Breast epithelium (tissue), 4 donors: ENCODE measurements at regions of chr12 and their contacts with region 1.

Region 1: DNA sequence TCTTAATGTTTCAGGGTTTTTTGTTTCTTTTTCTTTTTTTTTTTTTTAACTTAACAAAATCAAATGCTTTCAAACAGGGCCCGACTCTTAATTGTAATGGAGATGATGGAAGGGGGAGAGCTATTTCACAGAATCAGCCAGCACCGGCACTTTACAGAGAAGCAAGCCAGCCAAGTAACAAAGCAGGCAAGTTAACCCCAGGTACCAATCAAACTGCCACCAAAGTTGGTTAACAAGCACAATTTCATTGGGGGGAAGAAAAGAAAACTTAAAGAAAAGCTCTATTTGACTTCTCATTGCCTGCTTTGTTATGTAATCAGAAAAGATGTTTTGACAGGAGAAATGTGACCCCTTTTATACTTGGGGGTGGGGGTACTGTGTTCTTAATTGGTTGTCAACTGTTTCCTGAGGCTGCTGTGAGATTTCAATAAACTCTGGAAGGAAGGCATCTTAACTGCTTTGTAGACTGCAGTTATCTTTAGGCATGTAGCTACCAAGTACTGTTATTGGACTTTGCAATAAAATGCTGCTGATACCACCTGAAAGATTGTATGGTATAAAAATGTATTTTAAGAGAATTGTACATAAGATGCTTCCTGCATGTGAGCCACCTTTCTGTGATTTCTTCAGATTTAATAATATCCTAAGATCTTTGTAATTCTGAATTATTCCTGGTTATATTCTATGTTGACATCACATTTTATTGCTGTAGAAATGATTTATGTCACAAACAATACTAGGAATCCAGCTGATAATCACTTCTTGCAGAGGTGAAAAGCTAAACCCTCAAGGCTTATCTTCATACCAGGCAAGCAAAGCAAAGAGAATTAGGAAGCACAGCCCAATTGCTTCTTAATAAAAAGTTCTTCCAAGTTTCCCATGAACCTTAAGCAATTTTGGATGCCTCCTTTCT is 26.9 kb downstream of the MAPKAPK5 start:
- DNase-seq: no peak
- H3K4me3 ChIP-seq: no peak overlapping the region
- H3K27ac ChIP-seq: no peak overlapping the region
- H3K4me1 ChIP-seq: no peaks in the 10 kb centered on the region
- H3K27me3 ChIP-seq: no peaks in the 10 kb centered on the region
- CTCF ChIP-seq: no peak
- POLR2A ChIP-seq: no peak

Region 2: GRCh38 chr12:111927346-111927745 is 58.4 kb after region 1 on chr12:
- intact Hi-C with region 1: no loop called
- DNase-seq: no peak
- H3K4me3 ChIP-seq: no peak overlapping the region
- H3K27ac ChIP-seq: no peak overlapping the region
- H3K4me1 ChIP-seq: no peaks in the 10 kb centered on the region
- H3K27me3 ChIP-seq: no peaks in the 10 kb centered on the region
- CTCF ChIP-seq: no peak
- POLR2A ChIP-seq: no peak

Region 3: DNA sequence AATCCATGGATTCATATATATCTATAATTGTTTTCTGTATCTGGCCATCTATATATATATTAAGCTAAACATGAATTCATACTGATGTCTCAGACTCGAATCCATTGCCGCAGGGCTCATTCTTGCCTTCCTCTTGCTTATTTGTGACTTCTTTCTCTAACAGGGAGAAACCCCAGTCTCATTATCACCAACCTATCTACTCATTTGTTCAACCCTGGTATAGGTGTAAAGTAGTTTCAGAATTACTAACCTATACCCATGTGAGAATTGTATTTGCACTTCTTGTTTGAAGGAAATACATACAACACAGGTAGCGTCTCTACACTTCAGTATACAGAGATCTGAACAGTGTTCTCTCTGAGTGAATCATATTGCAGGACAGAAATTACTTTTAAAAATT is 627.6 kb after region 1 on chr12:
- intact Hi-C with region 1: loop called (anchors 10 kb)
- DNase-seq: no peak
- H3K4me3 ChIP-seq: no peak overlapping the region
- H3K27ac ChIP-seq: no peak overlapping the region
- H3K4me1 ChIP-seq: no peaks in the 10 kb centered on the region
- H3K27me3 ChIP-seq: no peaks in the 10 kb centered on the region
- CTCF ChIP-seq: no peak
- POLR2A ChIP-seq: no peak

Region 4: DNA sequence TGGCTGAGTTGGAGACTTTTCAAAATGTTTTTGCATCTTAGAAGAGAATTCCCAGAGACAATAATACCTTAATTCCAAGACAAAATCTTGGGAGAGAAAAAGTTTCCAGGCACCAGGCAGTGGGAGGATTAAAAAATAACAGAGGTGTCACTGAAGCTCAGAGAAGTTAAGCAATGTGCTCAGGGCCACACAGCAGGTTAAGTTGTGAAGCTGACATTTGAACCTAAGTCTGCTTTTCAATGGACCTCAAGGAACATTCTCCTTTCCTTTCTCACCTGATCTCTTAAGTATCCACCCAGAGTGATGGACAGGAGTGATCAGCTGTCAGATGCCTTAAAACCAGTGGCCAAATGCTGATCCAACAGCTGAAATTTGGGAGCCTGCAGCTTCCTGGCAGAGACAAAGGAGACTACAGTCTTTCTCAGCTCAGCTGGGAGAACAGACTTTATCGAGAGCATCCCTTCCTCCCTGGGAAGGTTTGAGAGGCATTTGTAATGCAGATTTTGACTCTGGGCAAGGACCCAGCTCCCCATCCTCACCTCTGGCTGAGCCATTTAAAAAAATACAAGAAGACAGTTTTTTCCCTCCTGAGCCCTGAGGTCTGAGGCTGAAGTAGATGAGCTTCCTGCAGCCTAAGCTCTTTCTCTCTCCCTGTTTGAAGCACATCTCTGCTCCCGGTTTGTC is 747.7 kb after region 1 on chr12:
- intact Hi-C with region 1: loop called (anchors 5 kb)
- DNase-seq: no peak
- H3K4me3 ChIP-seq: no peak overlapping the region
- H3K27ac ChIP-seq: no peak overlapping the region
- H3K4me1 ChIP-seq: no peaks in the 10 kb centered on the region
- H3K27me3 ChIP-seq: peaks cover 0 to 16% of the 10 kb centered on the region in 2 donors
- CTCF ChIP-seq: no peak
- POLR2A ChIP-seq: no peak